ENCODE measurements at regions of chr22 and their contacts with region 1.

Region 1: GRCh38 chr22:20156611-20157429 is 6.0 kb upstream of the CCDC188 start:
- DNase-seq: peak; percentile 83 to 88
- ATAC-seq: peak; percentile 68 to 85 (median 76)
- H3K4me3 ChIP-seq: no peak overlapping the region
- H3K27ac ChIP-seq: no peak overlapping the region
- H3K4me1 ChIP-seq: peaks cover 0 to 7% (median 4%) of the 10 kb centered on the region in 9 donors
- H3K27me3 ChIP-seq: peaks cover 0 to 7% (median 0%) of the 10 kb centered on the region in 7 donors
- CTCF ChIP-seq: peak in 8 of 9 donors; percentile 97 to 100 (median 98)

Region 2: DNA sequence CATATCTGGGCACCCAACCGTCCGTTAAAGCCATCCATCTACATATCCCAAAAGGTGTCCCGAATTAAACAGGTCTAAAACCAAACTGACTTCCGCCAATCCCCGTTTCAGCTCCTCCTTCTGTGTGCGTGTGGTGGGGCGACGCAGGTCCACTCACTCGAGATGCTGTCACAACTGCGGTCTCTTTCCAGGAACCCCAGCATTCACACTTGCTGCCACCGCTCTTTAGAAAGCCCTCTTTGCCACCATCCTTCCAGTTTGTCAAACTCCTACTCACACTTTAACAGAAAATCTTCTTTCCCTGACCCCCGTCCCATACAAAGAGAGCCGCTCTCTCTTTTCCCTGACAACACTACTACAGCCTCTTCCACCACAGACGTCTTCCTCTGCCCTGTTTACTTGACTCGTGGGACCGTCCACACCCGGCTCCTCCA is 1012.8 kb before region 1 on chr22:
- intact Hi-C with region 1: no loop called
- DNase-seq: no peak
- ATAC-seq: peak in 1 of 8 donors; percentile 2
- H3K4me3 ChIP-seq: peak overlapping the region; percentile 69 to 98 (median 84)
- H3K27ac ChIP-seq: peak overlapping the region in 9 of 10 donors; percentile 56 to 87 (median 73)
- H3K4me1 ChIP-seq: peaks cover under 1 to 18% (median 13%) of the 10 kb centered on the region in 9 donors
- H3K27me3 ChIP-seq: peaks cover 9 to 22% (median 12%) of the 10 kb centered on the region in 7 donors
- CTCF ChIP-seq: no peak

Region 3: DNA sequence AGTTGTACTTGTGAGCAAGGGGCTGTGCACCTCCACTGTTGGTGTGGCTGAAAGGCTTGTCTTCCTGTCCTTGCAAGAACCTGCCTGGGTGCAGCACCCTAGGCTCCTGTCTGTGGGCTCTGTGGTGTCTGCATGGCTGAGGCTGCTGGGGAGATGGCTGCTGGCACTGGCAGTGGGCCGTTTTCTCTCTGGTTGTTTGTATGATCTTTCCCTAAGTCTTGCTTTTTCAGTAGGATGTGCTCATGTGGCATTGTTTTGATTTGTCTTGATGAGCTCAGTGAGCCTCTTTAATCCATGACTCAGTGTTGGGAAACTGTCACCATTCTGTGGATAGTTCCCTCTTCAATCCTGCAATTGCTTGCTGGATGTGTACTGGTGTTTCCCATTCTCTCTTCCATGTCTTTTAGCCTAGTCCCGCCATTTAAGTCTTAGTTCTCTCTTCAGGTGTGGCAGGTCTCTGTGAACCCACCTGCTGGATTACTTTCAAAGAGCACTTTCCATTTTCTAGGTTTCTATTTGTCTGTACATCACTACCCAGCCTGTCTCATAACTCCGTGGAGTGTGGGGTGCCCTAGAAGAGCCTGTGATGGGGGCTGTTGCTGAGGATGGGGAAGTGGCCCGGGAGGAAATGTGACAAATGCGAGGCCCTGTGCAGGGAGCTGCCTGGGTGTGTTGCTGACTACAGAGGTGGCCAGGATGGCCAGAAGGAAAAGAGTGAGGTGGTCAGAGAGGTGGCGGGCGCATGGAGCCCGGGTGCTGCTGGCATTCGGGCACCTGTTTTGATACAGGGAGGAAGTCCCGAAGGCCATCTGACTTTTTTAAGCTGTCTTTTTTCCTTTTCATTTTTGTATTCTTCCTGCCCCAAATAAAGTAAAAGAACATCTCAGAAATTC is 66.2 kb before region 1 on chr22:
- intact Hi-C with region 1: no loop called
- DNase-seq: no peak
- ATAC-seq: no peak
- H3K4me3 ChIP-seq: no peak overlapping the region
- H3K27ac ChIP-seq: no peak overlapping the region
- H3K4me1 ChIP-seq: peaks cover 0 to 12% (median 1%) of the 10 kb centered on the region in 9 donors
- H3K27me3 ChIP-seq: no peaks in the 10 kb centered on the region
- CTCF ChIP-seq: no peak

Region 4: GRCh38 chr22:20205964-20206708 is 49.3 kb after region 1 on chr22:
- intact Hi-C with region 1: loop called in 1 of 10 experiments (anchors 10 kb)
- DNase-seq: peak; percentile 62 to 81
- ATAC-seq: peak; percentile 40 to 89 (median 82)
- H3K4me3 ChIP-seq: peak overlapping the region; percentile 38 to 76 (median 66)
- H3K27ac ChIP-seq: peak overlapping the region; percentile 72 to 96 (median 86)
- H3K4me1 ChIP-seq: peaks cover 33 to 59% (median 44%) of the 10 kb centered on the region in 9 donors
- H3K27me3 ChIP-seq: no peaks in the 10 kb centered on the region
- CTCF ChIP-seq: peak in 4 of 9 donors; percentile 11 to 28 (median 18)

Region 5: DNA sequence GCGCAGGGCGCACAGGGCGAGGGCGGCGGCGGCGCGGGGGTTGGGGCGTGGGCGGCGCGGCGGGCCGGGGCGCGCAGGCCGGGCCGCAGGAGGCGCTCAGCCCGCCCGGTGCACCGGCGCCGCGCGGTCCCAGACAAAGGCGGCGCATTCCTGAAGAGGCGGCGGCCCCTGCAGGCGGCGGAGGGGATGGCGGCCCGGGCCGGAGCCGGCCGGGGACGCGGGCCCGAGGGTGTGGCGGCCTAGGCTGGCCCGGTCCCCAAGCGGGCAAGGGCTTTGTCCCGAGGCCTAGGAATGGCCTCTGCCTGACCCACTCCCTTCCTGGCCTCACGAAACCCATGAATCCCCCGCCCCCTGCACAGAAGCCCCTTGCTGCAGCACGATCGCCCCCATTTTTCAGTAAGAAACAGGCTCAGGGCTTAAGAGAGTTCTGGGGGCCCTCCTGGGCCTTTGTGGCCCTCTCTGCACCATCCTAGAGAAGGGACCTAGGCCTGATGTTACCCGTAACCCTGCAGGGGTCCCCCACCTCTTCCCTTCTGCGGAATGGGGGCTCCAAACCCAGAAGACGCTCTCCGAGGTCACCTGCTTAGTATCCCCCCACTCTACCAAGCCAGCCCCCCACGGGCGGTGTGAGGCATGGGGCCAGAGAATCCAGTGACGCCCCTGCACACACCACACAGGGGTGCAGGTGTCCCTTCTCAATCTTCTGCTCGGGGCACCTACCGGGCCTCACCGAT is 111.6 kb after region 1 on chr22 and contains the start of gene RTN4R:
- intact Hi-C with region 1: loop called in 9 of 10 experiments (anchors 1 to 5 kb)
- DNase-seq: peak; percentile 51 to 71
- ATAC-seq: peak; percentile 74 to 92 (median 86)
- H3K4me3 ChIP-seq: peak within 1 kb of the TSS; percentile 38 to 71 (median 50)
- H3K27ac ChIP-seq: peak within 1 kb of the TSS in 6 of 10 donors; percentile 23 to 60 (median 32)
- H3K4me1 ChIP-seq: peaks cover 6 to 17% (median 9%) of the 10 kb centered on the region in 9 donors
- H3K27me3 ChIP-seq: peaks cover 0 to 10% (median 0%) of the 10 kb centered on the region in 7 donors
- CTCF ChIP-seq: peak; percentile 56 to 84 (median 71)
- total RNA-seq, gene RTN4R: 0.56 to 2.5 (median 0.93) TPM

Region 6: GRCh38 chr22:20283674-20284066 is 126.8 kb after region 1 on chr22:
- intact Hi-C with region 1: loop called (anchors 1 to 5 kb)
- DNase-seq: no peak
- ATAC-seq: no peak
- H3K4me3 ChIP-seq: no peak overlapping the region
- H3K27ac ChIP-seq: no peak overlapping the region
- H3K4me1 ChIP-seq: no peaks in the 10 kb centered on the region
- H3K27me3 ChIP-seq: peaks cover 0 to 4% (median 0%) of the 10 kb centered on the region in 7 donors
- CTCF ChIP-seq: no peak